ENCODE measurements at regions of chr20 and their contacts with region 1.

Region 1: DNA sequence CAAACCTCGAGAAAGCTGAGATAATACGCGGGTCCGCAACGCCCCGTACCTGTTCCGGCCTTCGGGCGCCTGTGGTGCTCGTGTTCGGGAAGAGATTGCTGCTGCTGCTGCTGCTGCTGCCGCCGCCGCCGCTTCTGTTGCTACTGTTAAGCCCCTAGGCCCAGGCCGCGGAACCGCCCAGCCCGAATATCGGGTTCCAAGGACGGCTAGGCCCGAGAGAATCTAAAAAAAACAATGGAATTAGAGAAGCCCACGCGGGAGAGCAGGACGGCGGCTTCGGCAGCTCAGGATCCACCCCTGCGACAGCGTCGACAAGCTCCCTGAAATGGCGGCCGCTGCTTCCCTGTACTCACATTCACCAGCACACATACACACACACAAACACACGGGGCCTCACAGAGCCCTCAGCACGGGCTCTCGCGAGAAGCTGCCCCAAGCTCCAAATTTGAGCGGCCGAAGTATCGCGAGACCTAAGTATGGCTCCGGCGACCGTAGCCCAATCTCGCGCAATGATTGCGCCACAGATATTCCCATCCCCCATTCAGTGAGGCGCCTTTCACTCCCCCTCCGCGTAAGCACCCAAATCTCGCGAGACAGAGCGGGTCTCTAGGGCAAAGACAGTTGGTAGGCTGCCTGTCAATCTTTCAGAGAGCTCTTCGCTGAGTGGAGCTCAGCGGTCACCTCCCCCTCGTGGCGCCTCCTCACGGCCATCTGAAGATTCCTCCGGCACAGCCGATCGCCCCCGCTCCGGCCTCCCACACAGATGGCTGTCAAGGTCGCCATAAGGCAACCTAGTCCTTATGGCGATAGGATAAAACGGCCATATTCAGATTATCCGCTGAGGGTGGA is at the start of gene RBM39:
- DNase-seq: peak; percentile 100
- H3K4me3 ChIP-seq: peak within 1 kb of the TSS; percentile 95
- H3K27ac ChIP-seq: peak within 1 kb of the TSS; percentile 96
- H3K4me1 ChIP-seq: peaks cover 42% of the 10 kb centered on the region
- CTCF ChIP-seq: peak; percentile 33; the same call in 1 of the 2 replicates
- total RNA-seq, gene RBM39: 346 and 448 TPM in 2 replicates

Region 2: DNA sequence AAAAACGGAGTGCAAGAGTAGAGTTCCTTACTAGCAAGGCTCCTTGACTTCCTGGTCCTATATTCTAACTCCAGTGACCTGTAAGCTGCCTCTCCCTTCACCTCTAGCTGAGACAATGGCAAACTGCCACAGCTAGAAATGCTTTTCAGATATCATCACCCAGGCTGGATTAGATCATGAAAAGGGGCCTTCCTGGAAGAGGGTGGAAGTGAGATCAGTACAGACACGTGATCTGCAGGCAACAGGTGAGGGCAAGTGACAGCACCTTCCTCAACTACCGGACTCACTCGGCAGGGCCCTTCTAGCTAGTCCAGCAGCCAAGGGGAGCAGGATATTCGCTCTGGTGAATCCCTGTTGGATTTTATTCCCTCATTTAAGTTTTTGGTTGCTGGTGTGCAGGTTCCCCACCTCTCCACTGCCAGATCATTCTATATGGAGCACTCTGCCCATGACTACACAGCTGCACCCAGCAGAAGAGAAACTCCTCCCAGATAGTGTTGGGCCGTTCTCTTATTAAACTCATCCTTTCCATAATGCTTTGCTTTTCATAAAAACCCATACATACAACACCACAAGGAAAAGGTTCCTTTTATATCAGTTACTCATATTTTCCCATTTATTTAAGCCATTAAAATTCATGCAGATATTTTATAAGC is 423.5 kb before region 1 on chr20:
- CTCF ChIA-PET with region 1: no interaction called
- POLR2A ChIA-PET with region 1: no interaction called
- intact Hi-C with region 1: no loop called
- DNase-seq: no peak
- H3K4me3 ChIP-seq: no peak overlapping the region
- H3K27ac ChIP-seq: no peak overlapping the region
- H3K4me1 ChIP-seq: no peaks in the 10 kb centered on the region
- CTCF ChIP-seq: no peak

Region 3: GRCh38 chr20:35664544-35665221 is 77.4 kb before region 1 on chr20 and contains the starts of genes CPNE1 and RBM12:
- CTCF ChIA-PET with region 1: no interaction called
- POLR2A ChIA-PET with region 1: interaction called, 4 read pairs
- intact Hi-C with region 1: loop called (anchors 5 kb)
- DNase-seq: peak; percentile 95
- H3K4me3 ChIP-seq: peak within 1 kb of the TSS; percentile 76
- H3K27ac ChIP-seq: peak within 1 kb of the TSS; percentile 74
- H3K4me1 ChIP-seq: peaks cover 31% of the 10 kb centered on the region
- CTCF ChIP-seq: no peak
- total RNA-seq, gene CPNE1: 83.3 and 83.7 TPM in 2 replicates
- total RNA-seq, gene RBM12: 63.8 and 66.3 TPM in 2 replicates

Measured in OCI-LY7 (cell line).